ENCODE measurements at regions of chr20 and their contacts with region 1.

Region 1: GRCh38 chr20:44355498-44356352 is at the start of gene HNF4A:
- DNase-seq: peak; percentile 92
- ATAC-seq: peak; percentile 91
- H3K4me3 ChIP-seq: peak within 1 kb of the TSS; percentile 69 to 95 (median 92)
- H3K27ac ChIP-seq: peak within 1 kb of the TSS; percentile 73
- H3K4me1 ChIP-seq: peaks cover 76% of the 10 kb centered on the region
- H3K27me3 ChIP-seq: no peaks in the 10 kb centered on the region; a peak in 1 of 5 replicates
- CTCF ChIP-seq: peak; percentile 9; the same call in 1 of the 2 replicates
- EP300 ChIP-seq: peak in 1 of 2 experiments; percentile 50; a peak in 1 of 4 replicates
- POLR2A ChIP-seq: peak; percentile 85 to 98
- RAD21 ChIP-seq: peak; percentile 66
- total RNA-seq, gene HNF4A: 169 and 190 TPM in 2 replicates

Region 2: DNA sequence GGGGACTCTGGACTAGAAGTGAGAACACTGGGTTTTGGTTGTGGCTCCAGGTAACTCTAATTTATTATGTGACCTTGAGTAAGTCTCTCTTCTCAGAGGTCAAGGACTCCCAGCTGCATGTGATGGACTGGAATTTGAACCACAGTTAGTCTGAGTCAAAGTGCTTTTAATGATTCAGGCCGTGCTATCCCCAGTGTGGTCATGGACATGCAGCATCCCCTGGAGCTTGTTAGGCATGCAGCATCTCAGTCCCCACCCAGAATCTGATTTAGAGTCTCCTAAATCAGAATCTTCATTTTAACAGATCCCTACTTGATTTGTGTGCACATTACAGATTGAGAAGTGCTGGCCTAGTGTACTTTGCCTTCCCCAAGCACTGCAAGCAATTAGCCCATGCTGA is 366.9 kb before region 1 on chr20:
- CTCF ChIA-PET with region 1: no interaction called
- POLR2A ChIA-PET with region 1: no interaction called
- in situ Hi-C with region 1: no loop called
- intact Hi-C with region 1: no loop called
- DNase-seq: no peak
- ATAC-seq: no peak
- H3K4me3 ChIP-seq: no peak overlapping the region
- H3K27ac ChIP-seq: no peak overlapping the region
- H3K4me1 ChIP-seq: no peaks in the 10 kb centered on the region
- H3K27me3 ChIP-seq: peaks cover 2 to 6% of the 10 kb centered on the region in 2 experiments; a peak in 4 of 5 replicates
- CTCF ChIP-seq: no peak
- EP300 ChIP-seq: no peak
- POLR2A ChIP-seq: no peak
- RAD21 ChIP-seq: no peak

Region 3: DNA sequence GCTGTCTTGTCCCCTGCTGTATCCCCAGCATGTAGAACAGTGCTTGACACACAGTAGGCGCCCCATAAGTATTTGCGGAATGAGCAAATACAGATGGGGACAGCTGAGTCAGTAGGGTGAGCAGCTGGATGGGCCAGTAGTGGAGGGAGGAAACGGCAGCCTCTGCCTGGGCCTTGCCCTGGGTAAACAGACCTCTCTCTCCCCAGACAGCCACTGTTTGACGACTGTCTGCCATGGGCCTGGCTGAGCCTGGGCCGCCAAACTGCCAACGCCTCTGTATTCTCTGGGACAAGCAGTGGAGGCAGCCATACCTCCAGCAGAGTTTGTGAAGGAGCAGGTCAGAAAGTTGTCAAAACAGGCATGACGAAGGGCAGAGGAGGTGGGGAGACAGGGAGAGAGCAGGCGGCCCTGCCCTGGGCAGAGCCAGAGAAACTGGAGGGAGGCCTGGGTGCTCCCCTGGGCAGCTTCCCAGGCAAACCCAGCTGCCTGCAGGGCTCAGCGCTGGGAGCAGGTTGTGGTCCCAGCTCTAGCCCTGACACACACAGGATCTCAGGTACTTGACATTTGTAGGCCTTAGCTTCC is 15.0 kb after region 1 on chr20:
- CTCF ChIA-PET with region 1: no interaction called
- POLR2A ChIA-PET with region 1: interaction called, 13 read pairs
- in situ Hi-C with region 1: no loop called
- intact Hi-C with region 1: loop called (anchors 1 kb)
- DNase-seq: peak; percentile 97
- ATAC-seq: peak; percentile 99
- H3K4me3 ChIP-seq: peak overlapping the region in 2 of 3 experiments; percentile 34 to 63; a peak in 4 of 6 replicates
- H3K27ac ChIP-seq: peak overlapping the region; percentile 60
- H3K4me1 ChIP-seq: peaks cover 42% of the 10 kb centered on the region
- H3K27me3 ChIP-seq: no peaks in the 10 kb centered on the region
- CTCF ChIP-seq: peak; percentile 61
- EP300 ChIP-seq: peak; percentile 67 to 91; a peak in 2 of 4 replicates
- POLR2A ChIP-seq: no peak
- RAD21 ChIP-seq: peak; percentile 67; the same call in 1 of the 2 replicates